ENCODE measurements at regions of chr1 and their contacts with region 1.

Region 1: DNA sequence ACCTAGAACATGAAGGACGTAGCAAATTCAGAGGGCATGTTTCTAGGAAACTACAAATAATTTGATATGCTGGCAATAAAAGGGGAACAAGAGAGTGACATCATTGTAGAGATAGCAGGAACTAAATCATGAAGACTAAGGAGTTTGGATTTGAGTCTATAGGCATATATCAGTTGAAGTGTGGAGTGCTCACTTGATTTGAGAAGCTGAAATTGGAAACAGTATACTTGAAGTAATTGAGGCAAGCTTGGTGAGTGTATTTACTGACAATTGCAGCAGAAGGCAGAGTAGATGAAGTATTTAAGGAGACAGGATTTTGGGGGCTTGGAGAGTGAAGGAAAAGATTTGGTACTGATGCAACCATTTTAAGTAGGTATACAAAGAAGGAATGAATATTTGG is 6.4 kb upstream of the TMCO2 start:
- DNase-seq: no peak
- ATAC-seq: no peak
- H3K4me3 ChIP-seq: no peak overlapping the region
- H3K4me3 Mint-ChIP-seq: no peak overlapping the region
- H3K27ac ChIP-seq: peak overlapping the region in 1 of 2 experiments; percentile 58
- H3K27ac Mint-ChIP-seq: peak overlapping the region; percentile 77
- H3K4me1 ChIP-seq: peaks cover 7% of the 10 kb centered on the region
- H3K4me1 Mint-ChIP-seq: peaks cover 13% of the 10 kb centered on the region
- H3K27me3 ChIP-seq: no peaks in the 10 kb centered on the region
- H3K27me3 Mint-ChIP-seq: no peaks in the 10 kb centered on the region
- CTCF ChIP-seq: no peak

Region 2: GRCh38 chr1:40174788-40175187 is 66.6 kb before region 1 on chr1:
- CTCF ChIA-PET with region 1: no interaction called
- POLR2A ChIA-PET with region 1: no interaction called
- intact Hi-C with region 1: no loop called
- DNase-seq: no peak
- ATAC-seq: no peak
- H3K4me3 ChIP-seq: no peak overlapping the region
- H3K4me3 Mint-ChIP-seq: no peak overlapping the region
- H3K27ac ChIP-seq: no peak overlapping the region
- H3K27ac Mint-ChIP-seq: no peak overlapping the region
- H3K4me1 ChIP-seq: peaks cover 41% of the 10 kb centered on the region
- H3K4me1 Mint-ChIP-seq: peaks cover 64% of the 10 kb centered on the region
- H3K27me3 ChIP-seq: no peaks in the 10 kb centered on the region
- H3K27me3 Mint-ChIP-seq: no peaks in the 10 kb centered on the region
- CTCF ChIP-seq: no peak

Region 3: DNA sequence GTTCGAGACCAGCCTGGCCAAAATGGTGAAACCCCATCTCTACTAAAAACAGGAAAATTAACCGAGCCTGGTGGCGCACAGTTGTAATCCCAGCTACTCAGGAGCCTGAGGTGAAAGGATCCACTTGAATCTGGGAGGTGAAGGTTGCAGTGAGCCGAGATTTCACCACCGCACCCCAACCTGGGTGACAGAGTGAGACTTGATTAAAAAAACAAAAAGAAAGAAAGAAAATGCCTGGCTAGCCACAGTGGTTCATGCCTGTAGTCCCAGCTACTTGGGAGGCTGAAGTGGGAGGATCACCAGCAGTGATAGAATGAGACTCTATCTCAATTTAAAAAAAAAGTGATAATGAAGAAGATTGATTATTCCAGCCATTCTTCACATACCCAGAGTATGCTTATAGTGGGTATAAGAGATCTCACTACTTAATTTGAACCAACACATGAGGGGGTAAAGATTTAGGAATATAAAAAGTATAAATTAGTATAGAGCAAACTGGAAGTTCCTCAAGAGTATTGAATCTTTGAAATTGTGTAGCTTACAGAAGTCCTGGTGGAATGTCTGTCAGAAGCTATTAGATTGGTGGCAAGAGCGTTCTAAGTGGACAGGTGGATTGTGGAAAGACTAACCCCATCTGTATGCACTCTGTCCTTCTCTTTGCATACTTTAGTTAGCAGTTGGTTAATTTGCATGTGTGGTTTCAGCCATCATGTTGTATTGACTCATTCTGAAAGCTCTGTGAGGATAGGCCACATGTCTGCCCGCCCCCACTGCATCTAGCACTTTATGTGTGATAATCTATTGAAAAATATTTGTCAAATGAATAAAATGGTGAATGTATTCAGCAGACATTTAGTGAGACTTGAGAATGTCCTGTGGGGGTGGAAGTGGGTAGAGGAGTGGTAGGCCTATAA is 55.2 kb before region 1 on chr1:
- CTCF ChIA-PET with region 1: no interaction called
- POLR2A ChIA-PET with region 1: no interaction called
- intact Hi-C with region 1: loop called in 1 of 2 experiments (anchors 10 kb)
- DNase-seq: peak in 5 of 9 experiments; percentile 11 to 54 (median 36)
- ATAC-seq: peak; percentile 78
- H3K4me3 ChIP-seq: no peak overlapping the region
- H3K4me3 Mint-ChIP-seq: no peak overlapping the region
- H3K27ac ChIP-seq: no peak overlapping the region
- H3K27ac Mint-ChIP-seq: peak overlapping the region; percentile 66
- H3K4me1 ChIP-seq: peaks cover 18% of the 10 kb centered on the region
- H3K4me1 Mint-ChIP-seq: peaks cover 55% of the 10 kb centered on the region
- H3K27me3 ChIP-seq: no peaks in the 10 kb centered on the region
- H3K27me3 Mint-ChIP-seq: no peaks in the 10 kb centered on the region
- CTCF ChIP-seq: no peak

Region 4: DNA sequence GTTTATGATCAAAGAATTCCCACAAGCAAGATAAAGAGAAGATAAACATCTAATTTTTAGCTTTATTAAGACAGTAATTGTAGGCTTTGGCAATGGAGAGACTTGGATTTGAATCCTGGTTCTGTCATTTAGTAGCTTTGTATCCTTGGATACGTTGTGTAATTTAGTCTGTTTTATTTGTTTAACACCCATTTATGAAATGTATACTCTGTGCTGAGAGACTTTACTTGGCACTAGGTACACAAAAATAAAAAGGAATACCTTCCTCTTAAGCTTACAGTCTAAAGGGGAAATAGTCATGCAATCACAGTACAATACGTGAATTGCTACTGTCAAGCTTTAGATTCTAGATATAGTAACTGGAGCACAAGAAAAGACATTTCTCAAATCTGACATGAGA is 40.5 kb after region 1 on chr1:
- CTCF ChIA-PET with region 1: no interaction called
- POLR2A ChIA-PET with region 1: no interaction called
- intact Hi-C with region 1: no loop called
- DNase-seq: no peak
- ATAC-seq: no peak
- H3K4me3 ChIP-seq: no peak overlapping the region
- H3K4me3 Mint-ChIP-seq: no peak overlapping the region
- H3K27ac ChIP-seq: no peak overlapping the region
- H3K27ac Mint-ChIP-seq: no peak overlapping the region
- H3K4me1 ChIP-seq: no peaks in the 10 kb centered on the region
- H3K4me1 Mint-ChIP-seq: no peaks in the 10 kb centered on the region
- H3K27me3 ChIP-seq: no peaks in the 10 kb centered on the region
- H3K27me3 Mint-ChIP-seq: no peaks in the 10 kb centered on the region
- CTCF ChIP-seq: no peak

Measured in CD8-positive, alpha-beta T cell (primary cell).